H1 (cell line): ENCODE measurements at regions of chr17 and their contacts with region 1.

Region 1: GRCh38 chr17:58517734-58518609 is 3.5 kb upstream of the MTMR4 start:
- DNase-seq: peak; percentile 95 to 100
- H3K4me3 ChIP-seq: peak overlapping the region; percentile 79 to 94 (median 86)
- H3K27ac ChIP-seq: peak overlapping the region; percentile 58
- H3K4me1 ChIP-seq: peaks cover 0 to 17% (median 5%) of the 10 kb centered on the region in 4 experiments; a peak in 5 of 7 replicates
- H3K27me3 ChIP-seq: no peaks in the 10 kb centered on the region
- CTCF ChIP-seq: no peak
- EP300 ChIP-seq: 0 out of 3 replicates have a peak, but pooled peaks of 1 of the 2 experiments have one; percentile 42
- POLR2A ChIP-seq: peak in 1 of 2 experiments; percentile 79; a peak in 1 of 3 replicates
- RAD21 ChIP-seq: no peak

Region 2: DNA sequence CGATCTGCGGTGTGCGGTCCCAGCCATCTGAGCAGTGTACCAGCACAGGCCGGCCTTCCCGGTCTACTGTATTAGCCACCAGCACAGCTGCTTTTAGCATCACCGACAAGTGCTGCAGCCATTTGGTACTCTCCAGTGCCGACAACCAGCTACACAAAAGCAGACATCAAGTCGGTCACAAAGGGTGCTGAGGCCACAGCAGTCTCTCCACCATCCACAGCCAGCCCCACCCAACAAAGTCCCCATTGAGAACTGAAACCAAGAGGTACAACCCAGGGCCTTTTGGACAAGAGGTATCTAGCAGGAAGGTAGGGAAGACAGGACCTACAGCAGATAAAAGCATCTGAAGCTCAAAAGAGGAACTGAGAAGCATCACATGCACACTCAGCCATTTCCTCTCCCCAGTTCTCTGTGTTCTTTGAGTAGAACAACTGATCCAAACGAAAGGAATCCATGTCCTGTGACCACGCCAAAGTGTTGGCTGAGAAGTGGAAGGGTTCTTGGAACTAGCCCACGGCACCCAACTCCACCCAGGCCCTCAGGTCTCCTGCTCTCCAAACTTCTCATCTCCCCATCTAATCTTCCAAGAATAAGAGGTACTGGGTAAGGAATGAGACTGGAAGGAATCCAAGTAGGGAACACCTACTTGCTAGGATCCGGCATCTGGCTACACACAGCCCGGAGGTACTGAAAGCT is 13.0 kb before region 1 on chr17:
- CTCF ChIA-PET with region 1: interaction called, 3 read pairs
- POLR2A ChIA-PET with region 1: interaction called, 11 read pairs
- DNase-seq: no peak
- H3K4me3 ChIP-seq: no peak overlapping the region
- H3K27ac ChIP-seq: no peak overlapping the region
- H3K4me1 ChIP-seq: no peaks in the 10 kb centered on the region
- H3K27me3 ChIP-seq: no peaks in the 10 kb centered on the region
- CTCF ChIP-seq: no peak
- EP300 ChIP-seq: no peak
- POLR2A ChIP-seq: no peak
- RAD21 ChIP-seq: no peak

Region 3: GRCh38 chr17:58531661-58532554 is 13.9 kb after region 1 on chr17:
- CTCF ChIA-PET with region 1: interaction called, 163 read pairs
- POLR2A ChIA-PET with region 1: interaction called, 32 read pairs
- DNase-seq: peak in 1 of 2 experiments; percentile 87
- H3K4me3 ChIP-seq: peak overlapping the region; percentile 67 to 90 (median 72)
- H3K27ac ChIP-seq: no peak overlapping the region
- H3K4me1 ChIP-seq: peaks cover 7 to 15% (median 9%) of the 10 kb centered on the region in 4 experiments
- H3K27me3 ChIP-seq: peaks cover 0 to 6% (median 4%) of the 10 kb centered on the region in 4 experiments; a peak in 5 of 7 replicates
- CTCF ChIP-seq: no peak
- EP300 ChIP-seq: no peak
- POLR2A ChIP-seq: no peak
- RAD21 ChIP-seq: no peak

Region 4: DNA sequence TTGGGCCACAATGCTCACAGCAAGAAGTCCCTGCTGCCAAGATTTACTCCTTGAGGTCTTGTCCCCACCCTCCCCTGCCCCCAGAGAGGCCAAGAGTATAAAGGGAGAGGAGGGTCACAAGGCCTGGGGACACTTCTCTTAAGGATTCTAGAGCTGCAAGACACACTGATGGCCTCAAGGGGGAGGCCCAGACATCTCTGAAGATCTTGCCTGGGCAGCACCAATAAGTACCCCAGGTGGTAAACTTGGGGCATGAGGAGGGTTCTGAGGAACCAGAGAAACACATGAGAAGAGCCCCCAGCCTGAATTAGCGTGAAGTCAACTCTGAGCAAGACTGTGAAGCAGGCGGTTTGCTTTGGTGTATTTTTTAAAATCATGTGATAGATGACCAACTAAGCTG is 23.3 kb after region 1 on chr17:
- CTCF ChIA-PET with region 1: interaction called, 163 read pairs
- POLR2A ChIA-PET with region 1: interaction called, 4 read pairs
- DNase-seq: no peak
- H3K4me3 ChIP-seq: no peak overlapping the region
- H3K27ac ChIP-seq: no peak overlapping the region
- H3K4me1 ChIP-seq: no peaks in the 10 kb centered on the region; a peak in 1 of 7 replicates
- H3K27me3 ChIP-seq: no peaks in the 10 kb centered on the region
- CTCF ChIP-seq: peak; percentile 61 to 65 (median 64)
- EP300 ChIP-seq: no peak
- POLR2A ChIP-seq: no peak
- RAD21 ChIP-seq: peak; percentile 64 to 69

Region 5: DNA sequence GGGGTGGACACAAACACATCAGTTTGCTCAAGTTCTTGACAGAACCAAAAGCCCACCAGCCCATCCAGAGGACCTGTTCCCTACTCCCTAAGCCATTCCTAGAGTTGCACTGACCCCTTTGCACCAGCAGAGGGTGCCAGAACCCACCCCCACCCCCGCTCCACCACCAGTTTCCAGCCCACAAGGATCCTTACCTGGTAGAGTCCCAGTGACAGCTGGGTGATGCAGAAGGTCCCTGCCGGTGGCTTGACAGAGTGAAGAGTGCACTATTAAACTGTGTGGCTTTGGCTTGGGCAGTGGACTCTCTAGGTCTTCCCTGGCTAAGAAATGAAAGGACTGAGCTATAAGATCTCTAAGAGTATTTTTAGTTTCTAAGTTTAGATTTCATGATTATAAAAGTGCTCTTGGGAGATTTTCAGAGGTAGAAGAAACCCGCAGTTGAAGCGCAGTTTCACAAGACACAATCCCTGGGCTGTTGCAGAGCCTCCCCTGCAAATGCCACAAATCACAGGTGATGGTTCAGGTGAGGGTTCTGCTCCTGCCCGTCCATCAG is 69.8 kb after region 1 on chr17:
- CTCF ChIA-PET with region 1: interaction called, 14 read pairs
- POLR2A ChIA-PET with region 1: interaction called, 4 read pairs
- DNase-seq: peak; percentile 46 to 70
- H3K4me3 ChIP-seq: no peak overlapping the region
- H3K27ac ChIP-seq: no peak overlapping the region
- H3K4me1 ChIP-seq: no peaks in the 10 kb centered on the region
- H3K27me3 ChIP-seq: no peaks in the 10 kb centered on the region
- CTCF ChIP-seq: peak; percentile 91 to 96 (median 91)
- EP300 ChIP-seq: no peak
- POLR2A ChIP-seq: no peak
- RAD21 ChIP-seq: peak; percentile 92 to 94